ENCODE measurements at regions of chr10 and their contacts with region 1.

Region 1: GRCh38 chr10:67779465-67780203 is 58.4 kb downstream of the DNAJC12 start:
- DNase-seq: peak; percentile 27 to 84 (median 77)
- ATAC-seq: peak; percentile 91
- H3K4me3 ChIP-seq: no peak overlapping the region
- H3K4me3 Mint-ChIP-seq: no peak overlapping the region
- H3K27ac ChIP-seq: no peak overlapping the region
- H3K27ac Mint-ChIP-seq: peak overlapping the region in 2 of 9 donors; percentile 1 to 8
- H3K4me1 ChIP-seq: no peaks in the 10 kb centered on the region
- H3K4me1 Mint-ChIP-seq: peaks cover 10 to 39% (median 14%) of the 10 kb centered on the region in 7 donors
- H3K27me3 ChIP-seq: no peaks in the 10 kb centered on the region
- H3K27me3 Mint-ChIP-seq: no peaks in the 10 kb centered on the region

Region 2: GRCh38 chr10:66931340-66931948 is 848.2 kb before region 1 on chr10:
- CTCF ChIA-PET with region 1: no interaction called
- POLR2A ChIA-PET with region 1: no interaction called
- intact Hi-C with region 1: loop called in 1 of 2 experiments (anchors 2 kb)
- DNase-seq: no peak
- ATAC-seq: no peak
- H3K4me3 ChIP-seq: no peak overlapping the region
- H3K4me3 Mint-ChIP-seq: no peak overlapping the region
- H3K27ac ChIP-seq: no peak overlapping the region
- H3K27ac Mint-ChIP-seq: no peak overlapping the region
- H3K4me1 ChIP-seq: no peaks in the 10 kb centered on the region
- H3K4me1 Mint-ChIP-seq: peaks cover 0 to 8% (median 0%) of the 10 kb centered on the region in 7 donors
- H3K27me3 ChIP-seq: no peaks in the 10 kb centered on the region
- H3K27me3 Mint-ChIP-seq: peaks cover 22 to 47% (median 36%) of the 10 kb centered on the region in 5 donors

Region 3: GRCh38 chr10:67520924-67521520 is 258.6 kb before region 1 on chr10:
- CTCF ChIA-PET with region 1: no interaction called
- POLR2A ChIA-PET with region 1: no interaction called
- intact Hi-C with region 1: loop called (anchors 1 to 2 kb)
- DNase-seq: peak in 7 of 9 donors; percentile 10 to 46 (median 26)
- ATAC-seq: peak; percentile 74
- H3K4me3 ChIP-seq: no peak overlapping the region
- H3K4me3 Mint-ChIP-seq: no peak overlapping the region
- H3K27ac ChIP-seq: no peak overlapping the region
- H3K27ac Mint-ChIP-seq: no peak overlapping the region
- H3K4me1 ChIP-seq: no peaks in the 10 kb centered on the region
- H3K4me1 Mint-ChIP-seq: peaks cover 0 to 10% (median 3%) of the 10 kb centered on the region in 7 donors
- H3K27me3 ChIP-seq: no peaks in the 10 kb centered on the region
- H3K27me3 Mint-ChIP-seq: peaks cover 0 to 14% (median 4%) of the 10 kb centered on the region in 5 donors

Region 4: DNA sequence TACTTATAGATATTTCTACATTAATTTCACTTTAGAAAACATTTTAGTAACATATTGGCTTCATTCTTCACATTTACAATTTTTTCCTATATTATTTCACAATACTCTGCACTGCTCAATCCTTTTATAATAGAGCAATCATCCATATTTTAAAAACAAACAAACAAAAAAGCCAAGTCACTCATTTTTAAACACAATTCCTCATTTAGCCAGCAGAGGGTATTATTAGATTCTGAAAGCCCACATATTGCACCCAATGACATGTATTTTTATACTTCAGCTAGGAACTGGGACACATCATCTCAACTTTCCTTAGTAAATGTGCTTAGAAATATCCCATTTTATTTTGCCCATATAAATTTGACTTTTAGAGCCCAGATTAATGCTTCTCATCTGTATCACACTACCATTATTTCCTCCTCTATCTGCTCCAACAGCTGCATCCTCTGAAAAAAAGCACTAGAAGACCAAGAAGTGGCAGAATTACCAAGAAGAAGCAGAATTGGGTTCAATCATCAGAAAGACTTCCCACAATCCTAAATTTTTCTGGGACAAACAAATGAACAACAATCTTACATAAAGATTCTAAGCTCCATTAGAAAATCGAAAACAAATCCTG is 113.1 kb before region 1 on chr10:
- CTCF ChIA-PET with region 1: interaction called, 21 read pairs
- POLR2A ChIA-PET with region 1: no interaction called
- intact Hi-C with region 1: loop called (anchors 1 kb)
- DNase-seq: peak in 5 of 9 donors; percentile 8 to 21 (median 17)
- ATAC-seq: no peak
- H3K4me3 ChIP-seq: no peak overlapping the region
- H3K4me3 Mint-ChIP-seq: no peak overlapping the region
- H3K27ac ChIP-seq: no peak overlapping the region
- H3K27ac Mint-ChIP-seq: no peak overlapping the region
- H3K4me1 ChIP-seq: no peaks in the 10 kb centered on the region
- H3K4me1 Mint-ChIP-seq: no peaks in the 10 kb centered on the region
- H3K27me3 ChIP-seq: no peaks in the 10 kb centered on the region
- H3K27me3 Mint-ChIP-seq: peaks cover 0 to 32% (median 0%) of the 10 kb centered on the region in 5 donors

Region 5: GRCh38 chr10:68074775-68075549 is 295.3 kb after region 1 on chr10 and contains the start of gene HERC4:
- CTCF ChIA-PET with region 1: no interaction called
- POLR2A ChIA-PET with region 1: no interaction called
- intact Hi-C with region 1: loop called in 1 of 2 experiments (anchors 5 kb)
- DNase-seq: peak; percentile 80 to 91 (median 89)
- ATAC-seq: peak; percentile 97
- H3K4me3 ChIP-seq: peak within 1 kb of the TSS; percentile 91
- H3K4me3 Mint-ChIP-seq: peak within 1 kb of the TSS; percentile 91 to 98 (median 96)
- H3K27ac ChIP-seq: peak within 1 kb of the TSS; percentile 96
- H3K27ac Mint-ChIP-seq: peak within 1 kb of the TSS; percentile 89 to 95 (median 94)
- H3K4me1 ChIP-seq: peaks cover 15 to 21% of the 10 kb centered on the region in 2 donors
- H3K4me1 Mint-ChIP-seq: peaks cover 26 to 51% (median 41%) of the 10 kb centered on the region in 7 donors
- H3K27me3 ChIP-seq: peaks cover 0 to 3% of the 10 kb centered on the region in 2 donors
- H3K27me3 Mint-ChIP-seq: peaks cover 0 to 2% (median 0%) of the 10 kb centered on the region in 5 donors
- total RNA-seq, gene HERC4: 65.7 to 113 (median 78.6) TPM

Region 6: DNA sequence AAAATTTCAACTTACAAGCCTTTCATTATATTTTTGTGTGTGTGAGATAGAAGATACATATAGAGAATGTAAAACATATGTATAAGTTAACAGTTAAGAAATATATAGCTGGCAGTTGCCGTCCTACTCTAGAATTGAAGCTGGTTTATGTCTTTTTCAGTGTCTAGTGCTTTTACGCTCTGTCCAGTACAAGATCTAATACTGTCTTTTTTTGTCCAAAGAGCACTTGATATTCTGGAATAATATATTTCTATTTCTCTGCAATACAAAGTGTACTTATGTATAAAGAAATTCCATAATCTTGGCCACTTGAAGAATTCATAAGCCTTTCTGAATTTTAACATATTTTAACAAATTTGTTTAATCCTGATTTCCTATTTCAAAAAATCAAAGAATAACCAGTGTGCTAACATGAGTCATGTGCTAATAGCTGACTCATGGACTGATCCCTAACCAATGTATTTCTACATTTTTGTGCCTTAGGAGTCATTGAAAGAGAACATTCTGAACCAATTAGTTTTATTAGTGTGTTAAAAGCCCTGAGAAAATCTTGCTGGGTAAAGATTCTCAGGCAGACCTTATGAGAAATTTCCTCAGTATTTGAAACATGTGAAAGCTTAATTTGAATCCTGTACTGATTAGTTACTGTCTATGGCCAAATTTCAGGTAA is 868.2 kb after region 1 on chr10:
- CTCF ChIA-PET with region 1: no interaction called
- POLR2A ChIA-PET with region 1: no interaction called
- intact Hi-C with region 1: no loop called
- DNase-seq: no peak
- ATAC-seq: no peak
- H3K4me3 ChIP-seq: no peak overlapping the region
- H3K4me3 Mint-ChIP-seq: no peak overlapping the region
- H3K27ac ChIP-seq: no peak overlapping the region
- H3K27ac Mint-ChIP-seq: no peak overlapping the region
- H3K4me1 ChIP-seq: no peaks in the 10 kb centered on the region
- H3K4me1 Mint-ChIP-seq: peaks cover 0 to 12% (median 0%) of the 10 kb centered on the region in 7 donors
- H3K27me3 ChIP-seq: no peaks in the 10 kb centered on the region
- H3K27me3 Mint-ChIP-seq: no peaks in the 10 kb centered on the region

Measured in naive thymus-derived CD4-positive, alpha-beta T cell (primary cell).